Endothelial cell of umbilical vein (primary cell): ENCODE measurements at regions of chr17 and their contacts with region 1.

Region 1: GRCh38 chr17:19648475-19649406 is at the start of gene ALDH3A2:
- DNase-seq: peak; percentile 94
- H3K4me3 ChIP-seq: peak within 1 kb of the TSS; percentile 16 to 97 (median 88)
- H3K27ac ChIP-seq: peak within 1 kb of the TSS; percentile 59
- H3K4me1 ChIP-seq: peaks cover 26% of the 10 kb centered on the region
- H3K27me3 ChIP-seq: no peaks in the 10 kb centered on the region
- CTCF ChIP-seq: peak in 1 of 2 donors; percentile 20
- POLR2A ChIP-seq: peak; percentile 88
- total RNA-seq, gene ALDH3A2: 28.1 and 36.5 TPM in 2 replicates

Region 2: GRCh38 chr17:19424934-19425868 is 223.5 kb before region 1 on chr17:
- CTCF ChIA-PET with region 1: no interaction called
- POLR2A ChIA-PET with region 1: no interaction called
- dilution Hi-C with region 1: no loop called
- intact Hi-C with region 1: no loop called
- DNase-seq: no peak
- H3K4me3 ChIP-seq: no peak overlapping the region
- H3K27ac ChIP-seq: no peak overlapping the region
- H3K4me1 ChIP-seq: no peaks in the 10 kb centered on the region
- H3K27me3 ChIP-seq: peaks cover 0 to 3% of the 10 kb centered on the region in 2 experiments
- CTCF ChIP-seq: no peak
- POLR2A ChIP-seq: no peak

Region 3: GRCh38 chr17:19513897-19514488 is 134.7 kb before region 1 on chr17:
- CTCF ChIA-PET with region 1: interaction called, 7 read pairs
- POLR2A ChIA-PET with region 1: no interaction called
- dilution Hi-C with region 1: no loop called
- intact Hi-C with region 1: loop called (anchors 1 kb)
- DNase-seq: peak; percentile 73
- H3K4me3 ChIP-seq: no peak overlapping the region
- H3K27ac ChIP-seq: no peak overlapping the region
- H3K4me1 ChIP-seq: no peaks in the 10 kb centered on the region
- H3K27me3 ChIP-seq: no peaks in the 10 kb centered on the region
- CTCF ChIP-seq: peak; percentile 81 to 90
- POLR2A ChIP-seq: no peak

Region 4: GRCh38 chr17:19660219-19660870 is 11.6 kb after region 1 on chr17:
- CTCF ChIA-PET with region 1: interaction called, 20 read pairs
- POLR2A ChIA-PET with region 1: no interaction called
- dilution Hi-C with region 1: no loop called
- intact Hi-C with region 1: no loop called
- DNase-seq: no peak
- H3K4me3 ChIP-seq: no peak overlapping the region
- H3K27ac ChIP-seq: no peak overlapping the region
- H3K4me1 ChIP-seq: no peaks in the 10 kb centered on the region
- H3K27me3 ChIP-seq: no peaks in the 10 kb centered on the region
- CTCF ChIP-seq: no peak
- POLR2A ChIP-seq: no peak

Region 5: DNA sequence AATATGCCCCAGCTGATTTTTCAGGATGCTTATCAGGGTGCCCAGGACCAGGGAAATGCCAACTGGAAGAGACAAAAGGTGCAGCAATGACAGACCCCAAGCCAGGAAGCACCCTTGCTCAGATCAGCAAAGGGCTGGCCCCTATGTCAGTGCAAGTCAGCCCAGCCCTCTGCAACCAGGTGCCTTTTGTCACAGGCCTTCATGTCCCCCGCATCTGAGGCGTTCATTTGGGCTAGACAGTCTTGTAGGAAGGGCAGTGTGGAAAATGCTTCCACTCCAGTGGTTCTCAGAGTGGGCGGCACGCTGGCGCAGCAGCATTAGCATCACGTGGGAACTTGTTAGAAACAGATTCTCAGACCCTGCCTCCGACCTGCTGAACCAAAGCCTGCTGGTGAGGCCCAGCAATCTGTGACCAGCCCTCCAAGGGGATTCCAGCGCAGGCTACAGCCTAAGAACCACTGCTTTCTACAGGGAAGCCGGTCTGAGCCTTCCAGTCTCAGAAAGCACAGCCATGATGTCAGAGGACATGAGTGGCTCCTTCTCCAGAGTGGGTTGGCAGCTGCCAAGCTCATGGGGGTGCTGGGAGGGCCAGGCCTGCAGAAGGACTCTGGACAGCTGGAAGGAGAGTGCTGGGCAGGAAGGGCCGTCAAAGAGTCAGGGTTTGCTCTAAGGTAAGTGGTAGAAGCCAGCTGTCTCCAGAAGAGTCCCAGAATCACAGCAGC is 54.5 kb after region 1 on chr17:
- CTCF ChIA-PET with region 1: no interaction called
- POLR2A ChIA-PET with region 1: no interaction called
- dilution Hi-C with region 1: no loop called
- intact Hi-C with region 1: loop called (anchors 10 kb)
- DNase-seq: no peak
- H3K4me3 ChIP-seq: no peak overlapping the region
- H3K27ac ChIP-seq: no peak overlapping the region
- H3K4me1 ChIP-seq: no peaks in the 10 kb centered on the region
- H3K27me3 ChIP-seq: no peaks in the 10 kb centered on the region
- CTCF ChIP-seq: no peak
- POLR2A ChIP-seq: no peak

Region 6: DNA sequence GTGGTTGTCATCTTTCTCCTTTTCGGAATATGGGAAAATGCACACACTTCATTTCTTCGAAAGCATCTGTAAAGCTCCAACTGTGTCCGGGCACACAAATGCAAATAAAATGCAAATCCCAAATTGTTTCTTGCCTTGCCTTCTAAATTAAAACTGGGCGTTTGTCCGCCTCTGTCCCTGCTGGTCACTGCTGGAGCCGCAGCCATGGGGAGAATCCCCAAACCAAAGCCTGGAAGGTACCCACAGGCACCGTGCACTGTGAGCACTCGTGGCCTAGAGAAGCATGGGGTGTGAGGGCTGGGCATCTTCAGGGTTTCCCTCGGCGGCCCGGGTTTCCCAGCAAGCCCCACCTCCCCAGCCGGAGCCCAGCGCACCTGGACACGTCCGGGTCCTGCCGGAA is 64.7 kb after region 1 on chr17:
- CTCF ChIA-PET with region 1: no interaction called
- POLR2A ChIA-PET with region 1: no interaction called
- dilution Hi-C with region 1: no loop called
- intact Hi-C with region 1: no loop called
- DNase-seq: no peak
- H3K4me3 ChIP-seq: no peak overlapping the region
- H3K27ac ChIP-seq: no peak overlapping the region
- H3K4me1 ChIP-seq: no peaks in the 10 kb centered on the region
- H3K27me3 ChIP-seq: no peaks in the 10 kb centered on the region
- CTCF ChIP-seq: peak in 1 of 2 donors; percentile 10
- POLR2A ChIP-seq: no peak

Region 7: GRCh38 chr17:19753049-19753444 is 104.3 kb after region 1 on chr17:
- CTCF ChIA-PET with region 1: interaction called, 5 read pairs
- POLR2A ChIA-PET with region 1: no interaction called
- dilution Hi-C with region 1: no loop called
- intact Hi-C with region 1: loop called (anchors 2 kb)
- DNase-seq: peak; percentile 83
- H3K4me3 ChIP-seq: no peak overlapping the region
- H3K27ac ChIP-seq: peak overlapping the region; percentile 94
- H3K4me1 ChIP-seq: peaks cover 18% of the 10 kb centered on the region
- H3K27me3 ChIP-seq: no peaks in the 10 kb centered on the region
- CTCF ChIP-seq: no peak
- POLR2A ChIP-seq: no peak